ENCODE measurements at regions of chr7 and their contacts with region 1.

Region 1: DNA sequence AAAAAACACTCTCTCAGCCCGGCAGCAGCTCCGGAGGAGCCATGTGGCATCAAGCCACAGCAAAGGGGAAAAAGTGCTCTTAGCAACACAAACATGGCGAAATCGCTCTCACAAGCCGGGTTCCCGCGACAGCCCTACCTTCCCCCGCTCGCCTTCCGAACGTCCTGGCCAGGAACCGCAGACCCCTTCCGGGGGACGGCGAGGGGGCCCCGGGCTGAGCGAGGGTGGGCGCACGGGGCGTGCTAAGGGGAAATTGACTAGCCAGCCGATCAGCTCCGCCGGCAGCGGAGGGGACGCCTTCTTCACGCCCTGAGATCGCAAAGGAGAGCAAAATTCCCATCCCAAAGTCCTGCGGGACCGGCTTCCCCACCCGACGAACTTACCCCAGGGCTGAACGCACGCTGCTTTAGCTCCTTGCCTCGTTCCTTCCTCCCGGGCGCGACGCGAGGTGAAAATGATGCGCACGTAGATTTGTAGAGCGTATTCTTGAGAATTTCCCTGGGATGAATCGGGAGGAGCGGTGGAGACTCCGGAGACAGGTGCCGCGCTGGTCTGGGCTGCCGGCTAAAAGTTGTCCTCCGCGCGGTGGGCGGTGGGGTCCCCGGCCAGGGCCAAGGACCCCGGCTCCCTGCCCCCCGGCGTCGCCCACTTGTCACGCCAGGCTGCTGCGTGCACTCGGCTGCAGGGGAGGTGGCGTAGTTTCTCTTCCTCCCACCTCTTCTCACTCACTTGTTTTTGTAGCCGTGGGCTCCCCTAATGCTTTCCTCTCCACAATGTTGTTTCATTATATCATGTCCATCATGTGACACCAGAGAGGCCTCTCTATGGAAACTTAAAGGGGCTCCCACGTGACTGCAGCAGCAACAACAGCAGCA is 220.1 kb upstream of the MKLN1 start:
- DNase-seq: peak; percentile 75 to 84
- H3K4me3 ChIP-seq: peak overlapping the region; percentile 93 to 99 (median 98)
- H3K27ac ChIP-seq: peak overlapping the region; percentile 99 to 100 (median 100)
- H3K4me1 ChIP-seq: peaks cover 28 to 37% of the 10 kb centered on the region in 2 donors
- H3K27me3 ChIP-seq: no peaks in the 10 kb centered on the region
- CTCF ChIP-seq: no peak
- POLR2A ChIP-seq: peak; percentile 89 to 97

Region 2: DNA sequence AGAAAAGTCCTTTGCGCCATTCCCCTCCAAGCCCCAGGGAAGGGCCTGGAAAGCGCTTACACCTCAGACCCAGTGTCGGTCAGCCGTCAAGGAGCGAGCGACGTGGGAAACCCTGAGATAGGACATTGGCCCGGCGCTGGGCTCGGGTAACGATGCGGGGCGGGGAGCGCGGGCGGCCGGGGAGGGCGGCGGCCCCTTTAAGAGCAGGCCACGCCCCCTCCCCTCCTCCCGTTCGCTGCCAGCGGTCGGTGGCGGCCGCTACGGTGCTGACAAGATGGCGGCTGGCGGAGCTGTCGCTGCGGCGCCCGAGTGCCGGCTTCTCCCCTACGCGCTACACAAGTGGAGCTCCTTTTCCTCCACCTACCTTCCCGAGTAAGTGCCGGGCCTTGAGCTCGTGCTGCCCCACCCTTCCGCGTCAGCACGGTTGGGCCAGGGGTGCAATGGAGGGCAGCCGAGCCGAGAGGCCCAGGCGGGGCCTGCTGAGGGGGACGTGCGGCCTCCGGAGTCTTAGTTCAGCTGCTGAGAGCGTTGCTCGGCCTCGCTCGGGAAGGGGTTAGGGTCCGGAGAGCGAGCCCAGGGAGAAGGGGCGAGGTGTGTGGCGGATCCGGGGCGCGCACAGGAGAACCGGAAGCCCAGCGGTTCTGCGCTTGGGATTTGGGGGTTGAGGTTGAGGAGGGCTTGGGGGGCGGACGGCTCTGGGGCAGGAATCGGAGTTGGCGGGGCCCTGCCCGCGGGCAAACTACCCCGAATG is 220.2 kb after region 1 on chr7 and contains the start of gene MKLN1:
- intact Hi-C with region 1: loop called (anchors 10 kb)
- DNase-seq: peak; percentile 93
- H3K4me3 ChIP-seq: peak within 1 kb of the TSS; percentile 57 to 86 (median 86)
- H3K27ac ChIP-seq: peak within 1 kb of the TSS; percentile 82 to 99 (median 98)
- H3K4me1 ChIP-seq: peaks cover 36 to 45% of the 10 kb centered on the region in 2 donors
- H3K27me3 ChIP-seq: no peaks in the 10 kb centered on the region
- CTCF ChIP-seq: no peak
- POLR2A ChIP-seq: peak; percentile 65 to 95
- total RNA-seq, gene MKLN1: 93.1 to 175 (median 102) TPM

Measured in thyroid gland (tissue), 4 donors.